ENCODE measurements at regions of chr10 and their contacts with region 1.

Region 1: GRCh38 chr10:32445740-32446535 is at the start of gene CCDC7:
- DNase-seq: peak; percentile 63 to 97 (median 79)

Region 2: DNA sequence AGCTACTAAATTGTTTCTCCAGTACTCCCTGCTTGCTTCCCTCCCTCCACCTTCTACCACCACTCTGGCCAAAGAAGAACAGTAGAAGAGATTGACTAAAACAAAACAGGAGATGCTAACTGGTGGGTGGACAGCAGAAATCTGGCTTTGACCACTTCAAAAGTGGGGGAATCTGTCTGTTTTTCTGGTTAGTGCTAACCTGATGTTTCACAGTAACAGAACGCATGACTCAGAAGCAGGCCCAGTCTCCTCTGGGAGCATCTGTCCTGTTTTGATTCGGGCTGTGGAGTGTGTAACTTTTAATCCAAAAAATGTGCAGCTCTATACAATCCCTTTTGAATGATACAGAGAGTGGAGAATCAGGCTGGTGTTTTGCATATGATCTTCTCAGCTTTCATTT is 1381.6 kb before region 1 on chr10:
- intact Hi-C with region 1: no loop called
- DNase-seq: no peak

Region 3: DNA sequence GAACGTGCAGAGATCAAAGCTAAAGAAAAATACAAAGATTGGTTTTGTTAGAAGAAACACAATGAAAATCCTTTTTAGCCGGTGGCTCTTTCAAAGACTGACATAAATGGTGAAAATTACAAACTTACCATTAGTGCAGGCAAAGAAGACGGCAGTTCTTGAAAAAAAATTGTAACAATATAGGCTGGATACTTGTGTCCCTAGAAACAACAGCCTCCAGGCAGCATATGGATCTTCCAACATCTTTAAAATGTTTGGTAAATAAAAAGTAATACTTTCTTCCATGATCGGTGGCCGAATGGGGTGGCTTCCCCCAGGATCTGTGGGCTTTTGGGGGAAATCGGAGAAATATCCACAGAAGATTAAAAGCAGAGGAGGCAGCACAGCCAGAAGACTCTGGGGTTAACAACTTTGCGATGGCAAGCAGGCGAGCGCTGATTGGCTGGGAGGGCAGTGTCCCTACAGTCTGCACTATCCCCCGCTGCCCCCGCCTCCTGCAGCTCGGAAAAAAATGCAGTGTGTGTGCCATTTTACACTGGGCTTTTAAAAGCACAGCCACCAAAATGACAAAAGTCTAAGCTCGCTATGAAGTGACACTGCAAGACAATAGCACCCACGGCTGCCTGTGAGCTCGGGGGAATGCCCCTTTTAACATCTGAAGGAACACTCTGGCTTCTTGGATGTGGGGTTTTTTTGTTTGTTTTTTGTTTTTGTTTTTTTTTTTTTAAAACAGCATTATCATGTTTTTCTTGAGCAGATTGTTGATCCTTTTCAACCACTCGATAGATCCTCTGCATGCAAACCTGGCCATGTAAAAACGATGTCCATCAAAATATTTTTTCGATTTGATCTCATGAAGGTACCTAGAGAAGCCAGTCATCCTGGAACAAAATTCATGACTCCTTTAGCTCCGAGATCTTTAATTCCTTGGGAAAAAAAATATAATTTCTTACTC is 67.3 kb before region 1 on chr10:
- intact Hi-C with region 1: loop called (anchors 1 kb)
- DNase-seq: peak; percentile 92 to 99 (median 96)